ENCODE measurements at regions of chr2 and their contacts with region 1.

Region 1: DNA sequence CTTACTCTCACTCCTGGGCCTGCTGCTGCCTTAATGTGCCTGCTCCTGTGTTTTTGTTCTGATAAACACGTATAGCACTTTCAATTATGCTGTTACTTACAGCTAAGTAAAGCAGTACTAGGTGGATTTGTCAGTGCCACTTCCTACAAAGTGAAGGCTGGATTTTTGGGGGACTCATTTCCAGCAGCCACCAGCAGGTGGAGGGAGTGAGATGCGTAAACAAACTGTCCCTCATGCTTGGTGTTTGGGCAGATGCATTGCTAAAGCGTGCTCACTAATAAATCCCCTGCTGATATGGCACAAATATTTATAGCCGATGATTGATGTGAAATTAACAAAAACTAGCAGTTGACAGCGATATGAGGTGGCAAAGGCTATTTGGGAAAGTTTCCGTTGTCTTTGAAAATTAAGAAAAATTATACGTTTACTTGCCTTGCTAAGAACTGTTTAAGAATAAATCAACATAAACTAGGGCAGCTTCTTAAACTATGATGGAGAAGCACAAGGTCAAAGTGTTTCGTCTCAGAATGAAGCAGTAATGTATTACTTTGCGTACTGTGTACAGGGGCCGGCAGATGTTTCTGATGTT is 101.7 kb downstream of the AGAP1 start:
- DNase-seq: peak; percentile 78
- H3K4me3 ChIP-seq: no peak overlapping the region
- H3K27ac ChIP-seq: no peak overlapping the region
- H3K4me1 ChIP-seq: no peaks in the 10 kb centered on the region
- H3K27me3 ChIP-seq: no peaks in the 10 kb centered on the region
- CTCF ChIP-seq: peak; percentile 85

Region 2: GRCh38 chr2:235135990-235136561 is 459.4 kb before region 1 on chr2:
- intact Hi-C with region 1: loop called (anchors 5 kb)
- DNase-seq: peak; percentile 90
- H3K4me3 ChIP-seq: no peak overlapping the region
- H3K27ac ChIP-seq: no peak overlapping the region
- H3K4me1 ChIP-seq: no peaks in the 10 kb centered on the region
- H3K27me3 ChIP-seq: no peaks in the 10 kb centered on the region
- CTCF ChIP-seq: peak; percentile 75

Region 3: DNA sequence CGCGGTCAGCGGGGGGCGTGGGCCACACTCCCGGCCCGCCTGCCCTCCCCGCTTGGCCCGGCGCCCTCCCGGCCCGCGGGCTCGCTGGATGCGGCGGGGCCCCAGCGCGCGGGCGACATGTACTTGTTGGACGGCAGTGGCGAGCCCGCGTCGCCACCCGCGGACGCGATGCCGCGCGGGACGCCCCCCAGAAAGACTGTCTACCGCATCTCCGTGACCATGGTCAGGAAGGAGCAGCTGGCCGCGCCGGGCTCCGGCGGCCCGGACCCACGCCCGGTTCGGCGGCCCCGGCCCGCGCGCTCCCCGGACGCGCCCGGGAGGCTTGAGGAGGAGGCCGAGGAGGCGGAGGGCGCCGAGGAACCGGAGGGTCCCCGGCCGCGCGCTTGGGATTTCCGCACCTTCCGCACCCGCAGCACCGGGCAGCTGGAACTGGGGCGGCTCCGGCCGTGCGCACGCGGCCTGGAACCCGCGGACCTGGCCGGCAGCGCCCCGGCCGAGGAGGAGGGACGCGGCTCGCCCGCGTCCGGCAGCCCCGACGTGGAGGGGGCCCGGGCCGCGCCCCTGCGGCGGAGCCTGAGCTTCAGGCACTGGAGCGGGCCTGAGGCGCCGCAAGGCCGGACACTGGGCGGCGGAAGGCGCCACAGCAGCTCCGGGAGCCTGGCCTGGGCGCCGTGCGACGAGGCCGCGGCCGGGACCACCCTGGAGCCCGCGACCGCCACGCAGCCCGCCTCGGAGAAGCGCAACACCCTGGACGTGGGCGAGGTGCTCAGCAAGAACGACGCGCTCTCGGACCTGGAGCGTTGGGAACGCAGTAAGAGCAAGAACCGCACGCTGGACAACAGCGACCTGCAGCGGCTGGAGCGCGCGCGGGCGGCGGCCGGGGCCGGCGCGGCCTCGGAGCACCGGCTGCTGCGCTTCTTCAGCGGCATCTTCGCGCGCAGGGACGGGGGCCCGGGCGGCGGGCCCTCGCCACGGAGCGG is 74.8 kb after region 1 on chr2:
- intact Hi-C with region 1: loop called (anchors 5 kb)
- DNase-seq: peak; percentile 59
- H3K4me3 ChIP-seq: peak overlapping the region; percentile 41
- H3K27ac ChIP-seq: no peak overlapping the region
- H3K4me1 ChIP-seq: no peaks in the 10 kb centered on the region
- H3K27me3 ChIP-seq: no peaks in the 10 kb centered on the region
- CTCF ChIP-seq: peak; percentile 31

Region 4: DNA sequence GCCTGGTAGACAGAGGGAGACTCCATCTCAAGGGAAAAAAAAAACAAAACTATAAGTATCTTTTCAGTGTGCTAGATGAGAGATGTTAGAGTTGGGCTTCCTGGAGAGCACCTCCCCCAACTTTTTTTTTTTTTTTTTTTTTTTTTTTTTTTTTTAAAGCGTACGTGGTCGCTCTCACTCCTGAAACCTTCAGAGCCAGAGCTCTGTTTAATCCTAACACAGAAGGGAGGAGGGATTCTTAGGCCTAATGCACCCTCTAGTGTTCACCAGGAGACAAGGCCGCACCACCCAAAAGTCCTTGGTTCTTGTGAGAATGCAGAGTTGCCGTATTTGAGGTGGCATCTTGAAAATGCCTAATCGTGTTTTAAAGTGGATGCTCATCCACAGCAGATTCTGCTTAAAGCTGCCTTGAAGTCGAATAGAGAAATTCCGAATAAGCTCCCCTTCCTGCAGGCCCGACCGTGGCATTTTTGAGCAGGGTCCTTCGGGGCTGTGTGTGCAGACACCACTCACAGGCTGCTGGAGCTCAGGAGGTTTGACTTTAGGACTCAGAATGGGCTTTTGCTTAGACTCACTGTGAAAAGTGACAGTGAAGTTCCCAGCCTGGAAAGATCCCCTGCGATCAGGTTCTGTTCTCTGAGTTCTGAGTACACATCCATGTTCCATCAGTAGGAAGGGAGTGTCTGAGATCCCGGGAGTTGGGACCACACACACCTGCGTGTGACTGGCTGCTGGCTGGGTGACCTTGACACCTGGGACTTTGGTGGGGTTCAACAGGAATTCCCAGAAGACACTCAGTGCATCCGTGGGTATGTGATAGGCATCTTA is 151.0 kb after region 1 on chr2:
- intact Hi-C with region 1: loop called (anchors 2 kb)
- DNase-seq: peak; percentile 72
- H3K4me3 ChIP-seq: no peak overlapping the region
- H3K27ac ChIP-seq: no peak overlapping the region
- H3K4me1 ChIP-seq: no peaks in the 10 kb centered on the region
- H3K27me3 ChIP-seq: no peaks in the 10 kb centered on the region
- CTCF ChIP-seq: peak; percentile 69

Region 5: DNA sequence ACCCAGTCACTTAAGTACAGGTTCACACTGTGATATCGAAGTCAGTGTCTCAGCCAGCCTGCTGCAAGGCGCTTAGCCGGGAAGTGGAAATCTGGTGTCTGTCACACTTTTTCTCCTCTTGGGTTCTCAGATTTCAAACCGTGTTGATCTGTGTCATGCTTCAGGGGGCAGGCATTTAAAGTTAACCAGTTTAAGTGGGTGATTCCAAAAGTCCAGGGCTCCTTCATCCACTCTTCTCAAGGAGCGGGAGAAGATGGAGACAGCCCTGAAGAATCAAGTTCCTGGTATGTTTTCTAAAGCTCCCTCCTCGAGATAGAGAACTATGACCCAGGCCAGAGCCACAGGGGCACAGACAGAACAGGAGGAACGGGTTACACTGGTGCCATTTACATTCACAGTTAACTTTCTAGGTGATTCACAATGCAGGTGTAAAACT is 241.0 kb after region 1 on chr2:
- intact Hi-C with region 1: no loop called
- DNase-seq: no peak
- H3K4me3 ChIP-seq: no peak overlapping the region
- H3K27ac ChIP-seq: no peak overlapping the region
- H3K4me1 ChIP-seq: no peaks in the 10 kb centered on the region
- H3K27me3 ChIP-seq: no peaks in the 10 kb centered on the region
- CTCF ChIP-seq: no peak